Activated CD8-positive, alpha-beta T cell treated with anti-CD3 and anti-CD28 coated beads, Interleukin-2, amount 10 ng/mL, durations not matched to agents 7 days and 5 days (primary cell): ENCODE measurements at regions of chr6 and their contacts with region 1.

Region 1: DNA sequence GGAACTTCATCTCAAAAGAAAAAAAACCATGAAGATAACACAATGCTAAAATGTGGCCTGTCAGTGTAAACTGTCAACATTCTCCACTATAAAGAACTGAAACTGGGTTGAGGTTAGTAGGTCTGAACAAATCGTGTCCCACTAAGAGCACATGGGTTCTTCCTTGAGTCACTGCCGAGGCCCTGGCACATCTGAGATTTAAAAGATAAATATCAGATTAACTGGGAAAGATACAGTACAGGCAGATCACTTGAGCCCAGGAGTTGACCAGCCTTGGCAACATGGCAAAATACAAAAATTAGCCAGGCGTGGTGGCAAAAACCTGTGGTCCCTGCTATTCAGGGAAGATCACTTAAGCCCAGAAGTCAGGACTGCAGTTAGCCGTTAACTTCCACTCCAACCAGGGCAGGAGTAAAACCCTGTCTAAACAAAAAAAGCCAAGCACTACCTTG is 5.6 kb downstream of the EEF1A1 start:
- DNase-seq: no peak
- ATAC-seq: peak; percentile 5
- H3K4me3 Mint-ChIP-seq: peak overlapping the region; percentile 70
- H3K27ac Mint-ChIP-seq: peak overlapping the region; percentile 76
- H3K4me1 Mint-ChIP-seq: peaks cover 38% of the 10 kb centered on the region
- H3K27me3 Mint-ChIP-seq: no peaks in the 10 kb centered on the region

Region 2: DNA sequence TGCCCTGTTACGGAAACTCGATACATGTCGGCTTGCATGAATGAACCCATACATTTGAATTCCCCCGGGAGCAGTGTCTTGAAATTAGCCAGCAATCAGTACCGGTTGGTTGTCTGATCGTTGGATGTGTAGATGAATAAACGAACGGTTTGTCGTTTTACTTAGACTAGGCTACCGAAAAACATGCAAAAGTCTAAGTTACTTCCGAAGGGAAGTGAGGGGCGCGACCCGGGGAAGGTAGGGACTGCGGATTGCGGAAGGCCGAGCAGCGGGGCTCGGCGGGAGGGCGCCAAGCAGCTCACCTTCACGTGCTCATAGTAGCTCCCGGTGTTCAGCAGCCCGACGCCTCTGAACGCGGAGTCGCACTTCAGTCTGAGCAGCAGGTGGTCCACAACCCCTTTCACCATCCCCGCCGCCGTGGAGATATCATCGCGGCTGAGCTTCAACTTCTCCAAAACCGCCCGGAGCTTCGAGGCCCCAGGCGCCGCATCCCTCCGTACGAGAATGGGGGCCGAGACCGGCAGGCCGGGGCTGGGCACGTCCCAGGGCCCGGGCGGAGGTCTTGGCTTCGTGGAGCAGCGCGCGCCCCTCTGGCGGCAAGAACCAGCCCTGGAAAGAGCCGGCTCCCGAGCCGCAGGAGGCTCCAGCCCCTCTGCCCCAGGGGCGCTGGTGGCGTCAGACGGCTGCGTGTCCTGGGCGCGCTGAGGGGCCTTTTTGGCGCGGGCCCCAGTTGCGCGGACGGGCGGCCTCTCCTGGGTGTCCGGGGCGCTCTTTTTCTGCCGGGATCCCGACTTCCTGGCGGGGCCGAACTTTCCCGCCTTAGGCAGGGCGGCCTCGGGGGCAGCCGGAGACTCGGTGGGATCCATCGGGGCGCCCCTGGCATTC is 63.8 kb before region 1 on chr6:
- CTCF ChIA-PET with region 1: interaction called, 6 read pairs
- POLR2A ChIA-PET with region 1: interaction called, 40 read pairs
- DNase-seq: peak; percentile 62
- ATAC-seq: peak; percentile 63
- H3K4me3 Mint-ChIP-seq: peak overlapping the region; percentile 89
- H3K27ac Mint-ChIP-seq: peak overlapping the region; percentile 90
- H3K4me1 Mint-ChIP-seq: peaks cover 45% of the 10 kb centered on the region
- H3K27me3 Mint-ChIP-seq: no peaks in the 10 kb centered on the region

Region 3: DNA sequence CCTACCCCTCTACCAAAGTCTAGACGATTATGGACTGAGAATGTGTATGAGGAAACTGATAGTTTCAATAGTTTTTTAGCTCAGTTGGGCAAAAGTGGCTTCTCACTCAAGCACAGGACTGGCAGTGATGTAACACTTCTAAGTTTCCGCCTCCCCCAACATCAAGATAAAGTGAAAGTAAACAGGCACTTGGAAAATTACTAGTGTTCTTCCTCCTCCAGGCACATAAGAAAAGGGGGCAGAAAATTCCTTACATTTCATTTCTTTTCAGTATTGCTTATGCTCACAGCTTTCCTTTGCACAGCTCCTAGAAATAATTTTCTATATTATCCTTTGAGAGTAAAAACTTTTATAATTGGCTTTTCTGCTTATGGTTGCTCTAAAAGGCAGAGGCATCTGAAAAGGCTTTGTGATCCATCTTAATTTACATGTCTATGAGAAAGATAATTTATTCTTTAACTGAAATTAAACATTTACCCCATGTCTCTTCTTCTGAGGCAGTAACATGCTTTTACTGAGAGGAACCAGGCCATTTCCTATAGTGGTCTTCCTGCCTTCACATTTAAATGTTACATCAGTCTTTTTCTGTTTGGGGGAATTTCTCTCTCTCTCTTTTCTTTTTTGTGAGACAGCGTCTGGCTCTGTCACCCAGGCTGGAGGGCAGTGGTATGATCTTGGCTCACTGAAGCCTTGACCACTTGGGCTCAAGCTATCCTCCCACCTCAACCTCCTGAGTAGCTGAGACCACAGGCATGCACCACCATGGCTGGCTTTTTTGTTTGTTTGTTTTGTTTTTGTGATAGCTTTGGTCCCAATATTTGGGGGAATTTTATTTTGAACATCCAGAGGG is 70.6 kb after region 1 on chr6:
- CTCF ChIA-PET with region 1: interaction called, 22 read pairs
- POLR2A ChIA-PET with region 1: interaction called, 166 read pairs
- DNase-seq: peak; percentile 70
- ATAC-seq: peak; percentile 81
- H3K4me3 Mint-ChIP-seq: peak overlapping the region; percentile 80
- H3K27ac Mint-ChIP-seq: peak overlapping the region; percentile 99
- H3K4me1 Mint-ChIP-seq: peaks cover 35% of the 10 kb centered on the region
- H3K27me3 Mint-ChIP-seq: no peaks in the 10 kb centered on the region

Region 4: DNA sequence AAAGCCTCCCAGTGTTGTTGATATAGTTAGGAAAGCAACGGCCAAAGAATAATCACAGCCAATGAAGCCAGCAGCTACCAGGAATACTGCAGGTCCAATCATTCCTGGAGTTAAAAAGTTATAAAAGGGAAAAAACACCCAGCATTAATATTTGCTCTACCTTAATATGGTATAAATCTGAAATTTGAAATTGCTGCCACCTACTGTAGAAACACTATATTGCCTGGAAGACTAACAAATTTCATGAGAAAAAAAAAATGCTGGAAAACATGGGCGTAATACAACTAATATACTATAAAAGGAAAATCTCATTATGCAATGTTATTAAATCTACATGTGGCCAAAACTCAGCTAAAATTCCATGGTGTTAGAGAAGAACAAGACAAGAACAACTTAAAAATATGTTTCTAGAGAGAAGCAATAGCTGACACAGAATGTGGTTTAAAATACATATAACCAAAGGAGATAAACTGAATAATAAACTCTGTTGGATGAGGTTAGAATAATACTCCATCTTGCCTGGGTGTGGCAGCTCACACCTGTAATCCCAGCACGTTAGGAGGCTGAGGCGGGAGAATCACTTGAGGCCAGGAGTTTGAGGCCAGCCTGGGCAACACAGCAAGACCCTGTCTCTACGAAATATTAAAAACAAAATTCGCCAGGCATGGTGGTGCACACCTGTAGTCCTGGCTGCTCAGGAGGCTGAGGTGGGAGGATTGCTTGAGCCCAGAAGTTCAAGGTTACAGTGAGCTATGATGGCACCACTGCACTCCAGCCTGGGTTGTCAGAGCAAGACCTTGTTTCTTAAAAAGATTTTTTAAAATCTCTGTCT is 95.4 kb after region 1 on chr6:
- CTCF ChIA-PET with region 1: interaction called, 157 read pairs
- POLR2A ChIA-PET with region 1: interaction called, 122 read pairs
- DNase-seq: no peak
- ATAC-seq: no peak
- H3K4me3 Mint-ChIP-seq: no peak overlapping the region
- H3K27ac Mint-ChIP-seq: no peak overlapping the region
- H3K4me1 Mint-ChIP-seq: no peaks in the 10 kb centered on the region
- H3K27me3 Mint-ChIP-seq: no peaks in the 10 kb centered on the region

Region 5: DNA sequence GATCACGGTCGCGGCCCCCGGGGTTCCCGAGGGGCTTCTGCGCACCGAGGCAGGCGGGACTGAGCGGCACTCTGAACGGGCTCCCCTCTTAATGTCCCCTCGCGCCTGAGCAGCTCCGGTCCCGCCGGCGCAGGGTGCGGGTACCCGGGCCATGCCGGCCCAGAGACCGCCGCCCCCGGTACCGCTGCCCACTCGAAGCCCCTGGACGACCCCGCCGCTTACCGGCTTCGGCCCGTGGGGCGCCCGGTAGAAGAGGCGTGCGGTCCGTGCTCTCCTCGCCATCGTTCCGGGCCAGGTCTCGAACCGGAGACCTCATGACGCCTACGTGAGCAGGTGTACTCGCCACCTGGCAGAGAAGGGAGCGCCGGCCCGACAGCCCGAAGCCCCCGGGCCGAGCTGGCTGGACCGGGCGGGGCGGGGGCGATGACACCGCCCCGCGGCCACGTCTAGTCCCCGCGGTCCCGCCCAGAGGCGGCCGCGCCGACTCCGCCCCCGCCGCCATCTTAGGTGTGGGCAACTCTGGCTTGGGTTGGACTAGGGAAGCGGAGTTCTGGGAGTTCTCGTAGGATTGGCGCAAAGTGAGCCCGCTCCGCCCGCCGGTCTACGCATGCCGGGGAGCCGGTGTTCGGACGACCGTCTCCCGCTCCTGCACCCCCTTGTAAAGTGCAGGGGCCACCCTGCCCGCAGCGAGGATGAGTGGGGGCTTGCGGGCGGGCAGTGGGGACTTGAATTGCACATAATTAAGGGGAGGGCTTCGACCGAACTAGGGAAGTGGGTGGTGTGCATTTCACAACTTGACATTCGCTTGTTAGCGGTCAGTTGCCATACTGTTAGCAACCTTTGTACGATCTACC is 138.6 kb after region 1 on chr6 and contains the start of gene SLC17A5:
- CTCF ChIA-PET with region 1: interaction called, 32 read pairs
- POLR2A ChIA-PET with region 1: interaction called, 85 read pairs
- DNase-seq: peak; percentile 93
- ATAC-seq: peak; percentile 91
- H3K4me3 Mint-ChIP-seq: peak within 1 kb of the TSS; percentile 99
- H3K27ac Mint-ChIP-seq: peak within 1 kb of the TSS; percentile 97
- H3K4me1 Mint-ChIP-seq: peaks cover 22% of the 10 kb centered on the region
- H3K27me3 Mint-ChIP-seq: no peaks in the 10 kb centered on the region
- total RNA-seq, gene SLC17A5: 5.0 to 5.7 TPM